Activated CD8-positive, alpha-beta T cell treated with anti-CD3 and anti-CD28 coated beads, Interleukin-2, amount 10 ng/mL, durations not matched to agents 7 days and 5 days (primary cell): ENCODE measurements at regions of chr10 and their contacts with region 1.

Region 1: DNA sequence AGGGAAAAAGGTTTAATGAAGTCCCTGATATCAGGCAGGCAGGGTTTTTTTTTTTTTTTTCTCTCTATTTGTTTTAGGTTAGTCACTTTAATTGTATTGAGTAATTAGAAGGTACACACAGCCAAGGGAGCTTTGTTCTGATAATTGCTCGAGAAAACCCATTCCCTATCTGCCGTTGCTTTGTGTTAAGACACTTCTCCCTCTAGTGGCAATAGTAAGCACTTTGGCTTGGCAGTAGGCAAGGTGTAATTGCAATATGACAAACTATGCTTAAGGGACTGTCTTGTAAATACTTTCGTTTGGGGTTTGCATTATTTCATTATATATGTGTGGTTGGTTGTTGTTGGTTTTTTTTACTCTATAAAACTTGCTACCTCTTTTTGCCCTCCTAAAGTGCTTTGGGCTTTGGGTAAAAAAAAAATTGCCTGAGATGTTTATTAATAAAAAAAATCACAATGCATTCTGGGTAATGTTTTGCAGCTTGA is 113.4 kb downstream of the BTRC start:
- DNase-seq: peak; percentile 47
- ATAC-seq: peak; percentile 80
- H3K4me3 Mint-ChIP-seq: no peak overlapping the region
- H3K27ac Mint-ChIP-seq: no peak overlapping the region
- H3K4me1 Mint-ChIP-seq: peaks cover 4% of the 10 kb centered on the region
- H3K27me3 Mint-ChIP-seq: peaks cover 5% of the 10 kb centered on the region

Region 2: DNA sequence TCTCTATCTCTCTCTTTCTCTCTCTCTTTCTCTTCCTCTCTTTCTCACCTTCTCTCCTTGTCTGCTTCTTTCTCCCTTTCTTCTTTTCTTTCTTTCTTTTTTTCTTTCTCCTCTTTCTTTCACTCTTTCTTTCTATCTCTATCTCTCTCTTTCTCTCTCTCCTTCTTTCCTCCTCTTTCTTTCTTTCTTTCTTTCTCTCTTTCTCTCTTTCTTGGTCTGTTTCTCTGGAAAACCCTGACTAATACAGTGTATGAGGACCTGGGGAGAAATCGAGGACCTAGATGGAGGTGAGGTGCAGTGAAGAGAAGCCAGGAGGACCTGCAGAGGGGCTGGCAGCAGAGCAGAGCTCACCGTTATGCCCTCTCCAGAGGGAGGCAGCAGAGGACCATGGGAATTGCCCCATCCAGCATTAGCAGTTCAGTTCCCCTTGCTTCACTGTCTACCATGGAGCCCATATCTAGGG is 166.0 kb before region 1 on chr10:
- CTCF ChIA-PET with region 1: interaction called, 24 read pairs
- POLR2A ChIA-PET with region 1: no interaction called
- DNase-seq: peak; percentile 51
- ATAC-seq: peak; percentile 54
- H3K4me3 Mint-ChIP-seq: no peak overlapping the region
- H3K27ac Mint-ChIP-seq: no peak overlapping the region
- H3K4me1 Mint-ChIP-seq: no peaks in the 10 kb centered on the region
- H3K27me3 Mint-ChIP-seq: peaks cover 20% of the 10 kb centered on the region

Region 3: GRCh38 chr10:101380353-101381017 is 86.8 kb before region 1 on chr10:
- CTCF ChIA-PET with region 1: no interaction called
- POLR2A ChIA-PET with region 1: no interaction called
- DNase-seq: no peak
- ATAC-seq: no peak
- H3K4me3 Mint-ChIP-seq: no peak overlapping the region
- H3K27ac Mint-ChIP-seq: no peak overlapping the region
- H3K4me1 Mint-ChIP-seq: no peaks in the 10 kb centered on the region
- H3K27me3 Mint-ChIP-seq: no peaks in the 10 kb centered on the region

Region 4: DNA sequence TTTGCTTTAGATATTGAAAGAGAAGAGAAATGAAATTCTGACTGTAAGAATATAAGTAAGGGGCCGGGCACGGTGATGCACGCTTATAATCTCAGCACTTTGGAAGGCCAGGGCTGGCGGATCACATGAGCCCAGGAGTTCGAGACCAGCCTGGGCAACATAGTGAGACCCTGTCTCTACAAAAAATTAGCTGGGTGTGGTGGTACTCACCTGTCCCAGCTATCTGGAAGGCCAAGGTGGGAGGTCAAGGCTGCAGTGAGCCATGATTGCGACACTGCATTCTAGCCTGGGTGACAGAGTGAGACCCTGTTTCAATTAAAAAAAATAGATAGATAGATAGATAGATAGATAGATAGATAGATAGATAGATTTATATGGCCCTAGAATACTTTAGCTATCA is 31.0 kb before region 1 on chr10:
- CTCF ChIA-PET with region 1: interaction called, 15 read pairs
- POLR2A ChIA-PET with region 1: no interaction called
- DNase-seq: no peak
- ATAC-seq: no peak
- H3K4me3 Mint-ChIP-seq: no peak overlapping the region
- H3K27ac Mint-ChIP-seq: no peak overlapping the region
- H3K4me1 Mint-ChIP-seq: no peaks in the 10 kb centered on the region
- H3K27me3 Mint-ChIP-seq: no peaks in the 10 kb centered on the region

Region 5: GRCh38 chr10:101441541-101442455 is 25.5 kb before region 1 on chr10:
- CTCF ChIA-PET with region 1: interaction called, 20 read pairs
- POLR2A ChIA-PET with region 1: no interaction called
- DNase-seq: peak; percentile 31
- ATAC-seq: peak; percentile 81
- H3K4me3 Mint-ChIP-seq: no peak overlapping the region
- H3K27ac Mint-ChIP-seq: no peak overlapping the region
- H3K4me1 Mint-ChIP-seq: peaks cover 3% of the 10 kb centered on the region
- H3K27me3 Mint-ChIP-seq: peaks cover 3% of the 10 kb centered on the region

Region 6: GRCh38 chr10:101453791-101454718 is 13.3 kb before region 1 on chr10:
- CTCF ChIA-PET with region 1: interaction called, 20 read pairs
- POLR2A ChIA-PET with region 1: no interaction called
- DNase-seq: peak; percentile 26
- ATAC-seq: peak; percentile 61
- H3K4me3 Mint-ChIP-seq: no peak overlapping the region
- H3K27ac Mint-ChIP-seq: no peak overlapping the region
- H3K4me1 Mint-ChIP-seq: peaks cover 15% of the 10 kb centered on the region
- H3K27me3 Mint-ChIP-seq: peaks cover 39% of the 10 kb centered on the region

Region 7: DNA sequence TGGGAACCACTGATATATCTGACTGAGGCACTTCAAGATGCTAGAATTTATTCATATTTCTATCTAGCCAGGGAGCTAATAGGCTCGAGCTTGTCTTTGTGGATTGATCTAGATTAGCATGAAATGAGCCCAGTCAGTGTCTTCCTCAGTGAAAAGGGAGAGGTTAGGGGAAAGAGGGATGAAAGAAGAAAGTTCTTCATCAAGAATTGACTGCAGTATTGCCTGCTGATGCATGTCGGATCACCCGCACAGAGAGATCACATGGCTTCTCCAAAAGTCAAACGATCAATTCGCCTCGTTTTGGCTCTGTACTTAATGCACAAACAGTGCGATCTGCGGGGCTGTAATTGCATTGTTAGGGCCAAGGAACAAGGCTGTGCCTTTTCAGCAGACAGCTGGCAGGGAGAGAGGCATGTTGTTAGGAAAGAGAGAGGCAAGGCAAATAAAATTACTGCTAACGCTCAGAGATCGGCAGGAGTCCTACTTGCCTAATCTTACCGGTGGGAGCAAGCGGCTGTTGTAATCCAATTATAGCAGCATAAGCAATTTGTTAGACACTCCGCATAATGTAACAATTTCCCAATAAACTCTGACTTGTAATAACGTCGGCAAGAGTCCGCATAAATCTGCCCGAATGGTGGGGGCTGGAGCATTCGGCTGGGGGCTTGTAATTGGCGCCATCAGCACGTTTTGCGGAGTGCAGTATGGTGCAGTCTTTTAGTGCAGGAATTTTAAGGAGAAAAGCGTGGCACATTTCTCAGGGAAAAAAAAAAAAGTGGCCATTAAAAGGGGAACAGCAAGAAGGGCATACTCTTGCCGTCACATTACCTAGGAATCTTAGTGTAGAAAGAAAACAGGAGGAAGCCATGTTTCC is 18.6 kb after region 1 on chr10:
- CTCF ChIA-PET with region 1: interaction called, 12 read pairs
- POLR2A ChIA-PET with region 1: no interaction called
- DNase-seq: no peak
- ATAC-seq: no peak
- H3K4me3 Mint-ChIP-seq: no peak overlapping the region
- H3K27ac Mint-ChIP-seq: no peak overlapping the region
- H3K4me1 Mint-ChIP-seq: peaks cover 3% of the 10 kb centered on the region
- H3K27me3 Mint-ChIP-seq: peaks cover 4% of the 10 kb centered on the region

Region 8: DNA sequence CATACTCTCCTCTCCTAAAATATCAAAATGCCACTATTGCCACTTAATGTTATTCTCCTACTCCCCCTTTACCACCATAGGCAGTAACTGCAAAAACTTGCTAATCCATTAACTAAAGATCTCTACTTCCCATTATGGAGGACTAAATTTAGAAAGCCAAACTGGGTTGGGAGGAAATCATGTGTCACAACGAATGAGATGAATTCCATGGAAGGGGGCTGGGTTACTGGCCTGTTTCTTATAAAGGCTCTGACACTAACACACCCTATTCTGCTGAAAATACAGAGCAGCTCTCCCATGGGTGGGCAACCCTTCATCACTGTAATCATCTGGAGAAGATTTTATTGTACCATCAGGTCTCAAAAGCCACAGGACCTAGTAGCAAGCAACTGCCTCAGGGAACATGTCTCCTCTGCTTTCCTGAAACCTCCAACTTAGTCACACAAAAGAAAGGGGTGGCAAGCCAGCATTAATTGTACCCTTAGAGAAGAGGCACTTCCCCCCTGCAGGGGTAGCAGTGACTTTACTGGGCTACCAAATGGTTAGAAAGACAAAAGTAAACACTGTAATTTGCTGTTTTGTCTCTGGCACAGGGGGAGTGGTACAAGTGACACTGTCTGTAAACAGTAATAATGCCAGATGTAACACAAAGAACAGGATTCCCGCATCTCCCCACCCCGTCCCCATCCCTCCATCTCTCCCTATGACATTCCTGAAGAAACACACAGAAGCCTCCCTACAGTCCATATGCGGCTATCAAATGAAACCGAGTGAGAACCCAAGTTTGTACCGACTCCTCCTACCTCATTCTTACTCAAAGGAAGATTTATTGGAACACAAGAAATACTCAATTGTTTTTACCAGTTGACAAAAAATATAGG is 507.0 kb after region 1 on chr10:
- CTCF ChIA-PET with region 1: no interaction called
- POLR2A ChIA-PET with region 1: no interaction called
- DNase-seq: no peak
- ATAC-seq: no peak
- H3K4me3 Mint-ChIP-seq: peak overlapping the region; percentile 4
- H3K27ac Mint-ChIP-seq: peak overlapping the region; percentile 86
- H3K4me1 Mint-ChIP-seq: peaks cover 26% of the 10 kb centered on the region
- H3K27me3 Mint-ChIP-seq: no peaks in the 10 kb centered on the region